H1 (cell line): ENCODE measurements at regions of chr19 and their contacts with region 1.

Region 1: GRCh38 chr19:4933528-4933927 is 24.2 kb downstream of the UHRF1 start:
- DNase-seq: no peak
- H3K4me3 ChIP-seq: no peak overlapping the region
- H3K27ac ChIP-seq: no peak overlapping the region
- H3K4me1 ChIP-seq: peaks cover 0 to under 1% (median 0%) of the 10 kb centered on the region in 4 experiments; a peak in 2 of 7 replicates
- H3K27me3 ChIP-seq: no peaks in the 10 kb centered on the region
- CTCF ChIP-seq: no peak
- EP300 ChIP-seq: no peak
- POLR2A ChIP-seq: no peak
- RAD21 ChIP-seq: no peak

Region 2: DNA sequence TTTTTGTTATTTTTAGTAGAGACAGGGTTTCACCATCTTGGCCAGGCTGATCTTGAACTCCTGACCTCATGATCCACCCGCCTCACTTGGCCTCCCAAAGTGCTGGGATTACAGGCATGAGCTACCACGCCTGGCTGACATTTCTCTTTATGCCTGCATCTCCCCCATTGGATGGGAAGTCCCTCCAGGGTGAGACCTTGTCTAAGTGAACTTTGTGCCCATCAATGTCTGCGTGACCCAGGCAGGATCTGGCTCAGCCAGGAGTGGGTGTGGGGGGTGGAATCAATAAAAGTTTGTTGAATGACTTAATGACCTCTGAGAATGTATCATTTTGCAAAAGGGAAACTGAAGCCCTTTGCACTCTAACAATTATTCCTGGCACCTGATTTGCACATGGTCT is 29.0 kb before region 1 on chr19:
- CTCF ChIA-PET with region 1: no interaction called
- POLR2A ChIA-PET with region 1: no interaction called
- DNase-seq: no peak
- H3K4me3 ChIP-seq: no peak overlapping the region
- H3K27ac ChIP-seq: no peak overlapping the region
- H3K4me1 ChIP-seq: peaks cover 0 to 8% (median 5%) of the 10 kb centered on the region in 4 experiments; a peak in 5 of 7 replicates
- H3K27me3 ChIP-seq: no peaks in the 10 kb centered on the region; a peak in 1 of 7 replicates
- CTCF ChIP-seq: no peak
- EP300 ChIP-seq: no peak
- POLR2A ChIP-seq: no peak
- RAD21 ChIP-seq: no peak

Region 3: DNA sequence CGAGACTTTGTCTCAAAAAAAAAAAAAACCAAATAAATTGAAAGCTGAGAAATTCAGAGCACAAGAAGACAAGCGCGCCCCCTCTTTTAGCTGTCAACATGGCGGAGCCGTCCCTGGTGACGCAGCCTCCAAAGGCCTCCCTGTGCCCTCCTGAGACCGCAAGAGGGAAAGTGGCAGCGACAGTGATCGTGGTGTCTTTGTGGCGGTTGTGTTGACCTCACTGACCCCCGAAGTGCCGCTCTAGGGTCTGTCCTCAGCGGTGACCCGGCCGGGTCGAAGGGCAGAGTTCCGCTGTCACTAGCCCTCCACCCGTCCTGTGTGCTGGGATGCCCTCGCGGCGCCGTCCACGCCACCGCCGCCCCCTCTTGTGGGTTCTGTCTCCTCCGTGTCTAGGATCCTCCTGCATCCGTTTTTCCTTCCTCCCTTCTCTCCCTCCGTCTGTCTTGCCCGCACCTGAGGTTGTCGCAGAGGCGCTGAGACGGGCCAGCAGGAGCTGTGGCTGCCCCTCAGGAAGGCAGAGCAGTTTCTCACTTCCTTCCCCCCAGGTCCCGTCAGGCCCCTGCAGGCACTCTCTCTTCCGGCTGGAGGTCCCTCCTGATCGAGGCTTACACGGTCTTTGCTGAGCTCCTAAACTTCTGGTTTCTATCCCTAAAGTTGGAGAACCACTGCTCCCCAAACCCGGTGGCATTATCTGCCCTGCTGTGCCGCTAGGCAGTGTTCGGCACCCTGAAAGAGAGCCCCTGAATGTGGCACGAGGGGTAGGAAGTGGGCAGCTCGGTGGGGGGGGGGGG is 17.0 kb before region 1 on chr19:
- CTCF ChIA-PET with region 1: interaction called, 17 read pairs
- POLR2A ChIA-PET with region 1: no interaction called
- DNase-seq: no peak
- H3K4me3 ChIP-seq: no peak overlapping the region
- H3K27ac ChIP-seq: no peak overlapping the region
- H3K4me1 ChIP-seq: peaks cover 0 to 2% (median 1%) of the 10 kb centered on the region in 4 experiments; a peak in 4 of 7 replicates
- H3K27me3 ChIP-seq: no peaks in the 10 kb centered on the region; a peak in 1 of 7 replicates
- CTCF ChIP-seq: no peak
- EP300 ChIP-seq: no peak
- POLR2A ChIP-seq: no peak
- RAD21 ChIP-seq: no peak

Region 4: DNA sequence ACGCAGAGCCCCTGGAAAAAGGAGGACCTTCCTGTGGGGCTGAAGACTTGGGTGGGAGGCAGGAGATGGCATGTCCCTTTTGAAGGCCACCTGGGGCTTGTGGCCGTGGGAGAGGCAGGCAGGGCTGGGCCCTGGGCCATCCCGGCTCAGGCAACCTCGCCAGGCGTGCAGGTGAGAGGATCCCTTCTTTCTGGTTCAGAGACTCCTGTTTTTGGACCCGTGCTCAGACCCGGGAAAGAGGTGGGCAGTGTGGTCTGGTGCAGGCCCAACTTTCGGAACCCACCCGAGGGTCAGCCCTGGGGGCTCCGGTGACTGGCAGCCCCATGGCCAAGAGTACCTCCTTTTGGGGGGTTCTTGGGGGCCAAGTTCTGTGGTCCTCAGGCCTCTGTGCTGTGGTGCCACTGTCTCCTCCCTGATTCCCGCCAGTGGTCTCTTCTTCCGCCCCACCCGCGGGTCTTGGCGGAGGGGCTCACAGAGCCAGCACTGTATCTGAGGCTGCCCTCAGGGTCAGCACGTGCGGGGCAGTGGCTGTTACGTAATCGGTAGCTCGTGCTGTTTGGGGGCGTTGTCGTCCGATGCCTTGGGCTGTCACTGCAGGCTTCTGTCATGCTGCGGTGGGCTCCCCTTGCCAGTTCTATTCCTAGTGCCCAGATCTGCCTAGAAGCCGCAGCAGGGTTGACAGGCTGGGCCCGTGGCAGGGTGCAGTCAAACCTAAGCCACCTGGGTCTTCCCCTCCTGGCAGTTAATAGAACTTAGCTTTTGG is 78.1 kb after region 1 on chr19:
- CTCF ChIA-PET with region 1: no interaction called
- POLR2A ChIA-PET with region 1: no interaction called
- DNase-seq: no peak
- H3K4me3 ChIP-seq: no peak overlapping the region
- H3K27ac ChIP-seq: no peak overlapping the region
- H3K4me1 ChIP-seq: no peaks in the 10 kb centered on the region
- H3K27me3 ChIP-seq: no peaks in the 10 kb centered on the region
- CTCF ChIP-seq: no peak
- EP300 ChIP-seq: no peak
- POLR2A ChIP-seq: no peak
- RAD21 ChIP-seq: no peak